ENCODE measurements at regions of chr11 and their contacts with region 1.

Region 1: GRCh38 chr11:96342961-96343711 is at the start of gene MAML2:
- H3K4me3 Mint-ChIP-seq: peak within 1 kb of the TSS; percentile 100
- H3K27ac Mint-ChIP-seq: peak within 1 kb of the TSS; percentile 96
- H3K4me1 Mint-ChIP-seq: peaks cover 47% of the 10 kb centered on the region
- H3K27me3 Mint-ChIP-seq: peaks cover 8% of the 10 kb centered on the region

Region 2: DNA sequence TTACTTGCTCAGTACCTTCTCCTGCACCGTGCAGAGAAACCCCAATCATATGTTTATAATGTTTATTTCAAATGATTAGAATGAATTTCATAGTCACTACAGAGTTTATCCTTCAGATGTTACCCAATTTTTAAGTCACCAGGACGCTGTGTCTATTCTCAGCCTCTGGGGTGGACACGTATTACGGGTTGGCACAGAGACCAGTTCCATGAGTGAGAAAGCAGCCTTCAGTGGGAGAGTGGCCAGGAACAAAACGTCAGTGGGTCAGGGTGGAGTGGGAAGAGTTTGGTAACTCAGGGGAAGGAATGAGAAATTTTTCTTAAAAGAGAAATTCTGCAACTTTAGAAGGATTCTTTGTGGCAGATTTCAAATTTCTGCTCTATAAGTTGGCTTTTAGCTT is 342.1 kb before region 1 on chr11:
- intact Hi-C with region 1: no loop called
- H3K4me3 Mint-ChIP-seq: no peak overlapping the region
- H3K27ac Mint-ChIP-seq: no peak overlapping the region
- H3K4me1 Mint-ChIP-seq: no peaks in the 10 kb centered on the region
- H3K27me3 Mint-ChIP-seq: no peaks in the 10 kb centered on the region

Region 3: GRCh38 chr11:96054870-96055705 is 288.0 kb before region 1 on chr11:
- intact Hi-C with region 1: loop called (anchors 1 kb)
- H3K4me3 Mint-ChIP-seq: no peak overlapping the region
- H3K27ac Mint-ChIP-seq: no peak overlapping the region
- H3K4me1 Mint-ChIP-seq: peaks cover 9% of the 10 kb centered on the region
- H3K27me3 Mint-ChIP-seq: no peaks in the 10 kb centered on the region

Region 4: GRCh38 chr11:96242971-96243647 is 100.0 kb before region 1 on chr11:
- intact Hi-C with region 1: loop called (anchors 5 kb)
- H3K4me3 Mint-ChIP-seq: peak overlapping the region; percentile 76
- H3K27ac Mint-ChIP-seq: peak overlapping the region; percentile 83
- H3K4me1 Mint-ChIP-seq: peaks cover 39% of the 10 kb centered on the region
- H3K27me3 Mint-ChIP-seq: no peaks in the 10 kb centered on the region

Region 5: DNA sequence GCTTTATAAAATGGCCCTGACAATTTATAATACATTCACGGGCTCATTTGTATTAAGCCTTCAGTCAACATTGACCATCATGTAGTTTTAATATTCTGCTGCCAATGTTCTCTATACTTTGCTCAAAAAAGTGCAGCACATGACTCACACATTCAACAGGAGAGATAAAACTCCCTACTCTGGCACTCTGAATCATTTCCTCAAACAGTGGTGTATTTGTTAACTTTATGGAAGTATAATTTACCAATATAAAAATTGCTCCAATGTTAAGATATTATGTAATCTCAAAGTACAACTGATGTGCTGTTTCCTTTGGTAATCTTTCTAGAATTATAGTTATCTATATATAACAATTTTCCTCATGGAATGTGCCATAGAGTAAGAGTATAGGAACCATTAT is 40.1 kb before region 1 on chr11:
- intact Hi-C with region 1: loop called (anchors 5 kb)
- H3K4me3 Mint-ChIP-seq: no peak overlapping the region
- H3K27ac Mint-ChIP-seq: no peak overlapping the region
- H3K4me1 Mint-ChIP-seq: peaks cover 59% of the 10 kb centered on the region
- H3K27me3 Mint-ChIP-seq: no peaks in the 10 kb centered on the region

Region 6: DNA sequence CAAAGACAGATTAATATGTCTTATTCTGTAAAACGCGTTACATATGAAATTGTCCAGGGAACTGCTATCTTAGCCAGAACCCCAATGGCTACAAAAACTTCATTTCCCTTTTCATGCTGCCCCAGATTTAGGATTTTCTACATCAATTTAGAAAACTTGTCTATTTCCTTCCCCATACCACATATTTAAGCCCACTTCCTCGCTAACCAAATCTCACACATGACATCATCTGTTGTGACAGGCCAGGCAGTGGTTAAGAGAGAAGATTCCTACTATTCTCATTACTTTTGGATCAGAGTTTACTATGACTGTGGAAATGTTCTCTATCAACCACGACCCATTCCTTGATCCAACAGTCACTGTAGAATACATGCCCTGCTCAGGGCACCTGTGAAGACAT is 30.7 kb after region 1 on chr11:
- intact Hi-C with region 1: no loop called
- H3K4me3 Mint-ChIP-seq: no peak overlapping the region
- H3K27ac Mint-ChIP-seq: no peak overlapping the region
- H3K4me1 Mint-ChIP-seq: peaks cover 5% of the 10 kb centered on the region
- H3K27me3 Mint-ChIP-seq: no peaks in the 10 kb centered on the region